ENCODE measurements at regions of chr2 and their contacts with region 1.

Region 1: DNA sequence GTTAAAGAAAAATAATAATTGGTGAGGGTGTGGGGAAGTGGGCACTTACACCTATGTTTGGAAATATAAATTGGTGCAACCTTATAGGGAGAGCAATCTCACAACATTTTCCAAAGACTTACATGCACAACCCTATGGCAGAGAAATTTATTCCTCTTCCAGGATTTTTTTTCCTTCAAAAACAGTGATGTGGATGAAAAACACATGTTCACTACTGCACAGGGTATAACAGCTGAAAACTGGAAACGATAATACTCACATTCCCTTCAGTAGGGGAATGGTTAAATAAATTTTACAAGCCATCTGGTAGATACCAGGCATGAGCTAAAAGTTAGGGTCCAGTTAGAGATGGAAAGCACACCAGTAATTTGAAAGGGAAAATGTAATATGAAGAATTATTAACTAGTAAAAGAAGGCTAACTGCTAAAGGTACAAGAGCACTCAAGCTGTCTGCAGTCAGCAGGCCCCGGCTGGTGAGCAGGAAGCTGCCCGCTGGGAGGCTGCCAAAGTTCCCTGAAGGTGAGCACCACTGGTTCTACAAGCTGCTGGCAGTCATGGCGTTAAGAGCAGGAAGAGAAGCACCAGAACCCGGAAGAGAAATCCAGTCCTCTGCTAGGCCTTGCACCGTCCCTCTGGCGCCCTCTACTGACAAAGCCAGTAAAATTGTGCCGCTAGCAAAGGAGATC is 28.4 kb upstream of the CASP8 start:
- DNase-seq: peak; percentile 96
- ATAC-seq: peak; percentile 58
- H3K4me3 Mint-ChIP-seq: peak overlapping the region; percentile 96
- H3K27ac Mint-ChIP-seq: peak overlapping the region; percentile 86
- H3K4me1 Mint-ChIP-seq: peaks cover 50% of the 10 kb centered on the region
- H3K27me3 Mint-ChIP-seq: no peaks in the 10 kb centered on the region

Region 2: GRCh38 chr2:201071479-201072200 is 160.3 kb before region 1 on chr2 and contains the starts of genes HYCC2 and NDUFB3:
- CTCF ChIA-PET with region 1: interaction called, 17 read pairs
- DNase-seq: peak; percentile 97
- ATAC-seq: peak; percentile 98
- H3K4me3 Mint-ChIP-seq: peak within 1 kb of the TSS; percentile 91
- H3K27ac Mint-ChIP-seq: peak within 1 kb of the TSS; percentile 88
- H3K4me1 Mint-ChIP-seq: peaks cover 55% of the 10 kb centered on the region
- H3K27me3 Mint-ChIP-seq: no peaks in the 10 kb centered on the region
- total RNA-seq, gene HYCC2: 33.4 to 37.2 TPM
- total RNA-seq, gene NDUFB3: 116 to 141 TPM

Region 3: DNA sequence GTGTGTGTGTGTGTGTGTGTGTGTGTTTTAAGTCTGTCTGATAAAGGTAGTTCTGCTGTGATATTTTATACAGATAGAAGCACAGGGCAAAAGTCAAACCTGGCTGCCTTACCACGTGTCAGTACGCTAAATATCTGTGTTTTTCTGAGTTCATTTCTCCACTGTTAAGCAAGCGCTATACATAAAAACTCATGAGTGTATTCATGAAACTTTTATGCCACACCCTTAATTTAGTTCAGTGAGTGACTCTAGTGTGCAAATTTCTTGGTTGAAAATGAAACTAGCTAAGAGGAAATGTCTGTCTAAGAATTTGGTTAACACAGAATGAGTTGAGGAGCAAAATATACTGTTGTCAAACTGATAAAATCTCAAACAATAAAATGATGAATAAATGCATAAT is 37.8 kb before region 1 on chr2:
- CTCF ChIA-PET with region 1: interaction called, 75 read pairs
- DNase-seq: no peak
- ATAC-seq: peak; percentile 85
- H3K4me3 Mint-ChIP-seq: peak overlapping the region; percentile 65
- H3K27ac Mint-ChIP-seq: peak overlapping the region; percentile 94
- H3K4me1 Mint-ChIP-seq: peaks cover 65% of the 10 kb centered on the region
- H3K27me3 Mint-ChIP-seq: no peaks in the 10 kb centered on the region

Region 4: DNA sequence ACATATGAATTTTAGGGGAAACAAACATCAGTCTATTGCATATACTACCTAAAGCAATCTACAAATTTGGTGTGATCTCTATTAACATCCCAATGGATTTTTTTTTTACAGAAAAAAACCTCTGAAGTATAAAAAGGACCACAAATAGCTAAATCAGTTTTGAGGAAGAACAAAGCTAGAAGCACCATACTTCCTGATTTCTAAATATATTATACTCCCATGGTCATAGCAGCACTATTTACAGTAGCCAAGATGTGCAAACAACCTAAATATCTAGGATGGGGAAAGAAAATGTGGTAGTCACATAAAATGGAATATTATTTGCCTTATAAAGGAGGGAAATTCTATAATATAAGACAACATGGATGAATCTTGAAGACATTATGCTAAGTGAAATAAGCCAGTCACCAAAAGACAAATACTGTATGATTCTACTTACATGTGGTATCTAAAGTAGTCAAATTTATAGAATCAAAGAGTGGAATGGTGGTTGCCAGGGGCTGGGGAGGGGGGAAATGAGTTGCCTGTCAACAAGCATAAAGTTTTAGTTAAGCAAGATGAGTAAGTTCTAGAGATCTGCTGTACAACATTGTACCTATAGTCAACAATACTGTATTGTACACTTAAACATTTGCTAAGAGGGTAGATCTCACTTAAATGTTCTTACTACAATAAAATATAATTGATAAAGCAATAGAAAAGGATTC is 10.8 kb after region 1 on chr2:
- CTCF ChIA-PET with region 1: interaction called, 13 read pairs
- DNase-seq: no peak
- ATAC-seq: no peak
- H3K4me3 Mint-ChIP-seq: no peak overlapping the region
- H3K27ac Mint-ChIP-seq: no peak overlapping the region
- H3K4me1 Mint-ChIP-seq: peaks cover 27% of the 10 kb centered on the region
- H3K27me3 Mint-ChIP-seq: no peaks in the 10 kb centered on the region

Region 5: GRCh38 chr2:201363857-201364560 is 132.1 kb after region 1 on chr2:
- CTCF ChIA-PET with region 1: interaction called, 38 read pairs
- DNase-seq: peak; percentile 45
- ATAC-seq: peak; percentile 82
- H3K4me3 Mint-ChIP-seq: no peak overlapping the region
- H3K27ac Mint-ChIP-seq: peak overlapping the region; percentile 78
- H3K4me1 Mint-ChIP-seq: peaks cover 25% of the 10 kb centered on the region
- H3K27me3 Mint-ChIP-seq: no peaks in the 10 kb centered on the region